ENCODE measurements at regions of chr16 and their contacts with region 1.

Region 1: GRCh38 chr16:53469936-53470335 is 33.1 kb downstream of the AKTIP start:
- DNase-seq: no peak
- ATAC-seq: no peak
- H3K4me3 ChIP-seq: no peak overlapping the region
- H3K27ac ChIP-seq: no peak overlapping the region
- H3K4me1 ChIP-seq: peaks cover 0 to 9% (median 0%) of the 10 kb centered on the region in 9 donors
- H3K27me3 ChIP-seq: no peaks in the 10 kb centered on the region
- CTCF ChIP-seq: no peak

Region 2: DNA sequence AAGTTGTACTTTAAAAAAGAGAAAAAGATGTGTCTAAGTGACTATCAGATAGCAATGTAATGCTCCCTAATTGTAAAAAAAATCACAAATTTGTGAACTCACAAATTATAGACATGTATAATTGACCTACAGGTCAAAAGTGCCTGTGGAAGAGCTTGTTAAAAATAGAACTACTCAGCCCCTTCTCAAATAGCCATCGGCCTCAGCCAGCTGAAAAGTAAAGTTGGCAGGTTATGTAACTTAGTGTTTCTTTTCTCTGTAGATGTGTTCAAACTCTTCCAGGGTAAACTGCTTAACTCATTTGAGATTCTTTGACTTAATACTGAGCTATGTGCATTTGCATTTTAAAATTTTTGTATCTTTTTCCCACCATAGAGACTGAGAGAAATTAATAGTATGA is 19.8 kb after region 1 on chr16:
- intact Hi-C with region 1: loop called in 1 of 10 experiments (anchors 1 kb)
- DNase-seq: no peak
- ATAC-seq: peak in 5 of 8 donors; percentile 33 to 70 (median 65)
- H3K4me3 ChIP-seq: no peak overlapping the region
- H3K27ac ChIP-seq: peak overlapping the region in 7 of 10 donors; percentile 5 to 59 (median 23)
- H3K4me1 ChIP-seq: peaks cover 0 to 12% (median 0%) of the 10 kb centered on the region in 9 donors
- H3K27me3 ChIP-seq: no peaks in the 10 kb centered on the region
- CTCF ChIP-seq: no peak

Region 3: GRCh38 chr16:53597776-53598175 is 127.8 kb after region 1 on chr16:
- intact Hi-C with region 1: no loop called
- DNase-seq: no peak
- ATAC-seq: no peak
- H3K4me3 ChIP-seq: no peak overlapping the region
- H3K27ac ChIP-seq: no peak overlapping the region
- H3K4me1 ChIP-seq: no peaks in the 10 kb centered on the region
- H3K27me3 ChIP-seq: no peaks in the 10 kb centered on the region
- CTCF ChIP-seq: no peak